Adrenal gland (tissue), 19 donors: ENCODE measurements at regions of chr4 and their contacts with region 1.

Region 1: DNA sequence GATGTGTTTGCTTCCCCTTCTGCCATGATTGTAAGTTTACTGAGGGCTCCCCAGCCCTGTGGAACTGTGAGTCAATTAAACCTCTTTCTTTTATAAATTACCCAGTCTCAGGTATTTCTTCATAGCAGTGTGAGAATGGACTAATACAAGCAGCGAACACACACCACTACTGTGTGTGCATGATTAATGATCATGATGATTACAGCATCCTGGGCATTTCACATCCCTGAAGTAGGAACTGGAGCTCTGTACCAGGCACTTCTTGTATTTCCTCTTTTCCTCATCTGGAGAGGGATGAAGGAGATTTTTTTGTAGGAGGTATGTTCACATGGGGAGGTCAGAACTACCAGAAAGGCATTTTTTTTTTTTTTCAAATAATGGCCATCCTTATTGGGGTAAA is 60.8 kb downstream of the PPM1K start:
- DNase-seq: no peak
- H3K4me3 ChIP-seq: no peak overlapping the region
- H3K27ac ChIP-seq: no peak overlapping the region
- H3K4me1 ChIP-seq: no peaks in the 10 kb centered on the region
- H3K27me3 ChIP-seq: no peaks in the 10 kb centered on the region
- CTCF ChIP-seq: no peak
- POLR2A ChIP-seq: no peak

Region 2: GRCh38 chr4:88147799-88148217 is 75.7 kb before region 1 on chr4:
- intact Hi-C with region 1: no loop called
- DNase-seq: no peak
- H3K4me3 ChIP-seq: no peak overlapping the region
- H3K27ac ChIP-seq: no peak overlapping the region
- H3K4me1 ChIP-seq: no peaks in the 10 kb centered on the region
- H3K27me3 ChIP-seq: no peaks in the 10 kb centered on the region
- CTCF ChIP-seq: no peak
- POLR2A ChIP-seq: no peak

Region 3: GRCh38 chr4:88366460-88366859 is 142.9 kb after region 1 on chr4:
- intact Hi-C with region 1: loop called in 1 of 2 experiments (anchors 5 kb)
- DNase-seq: no peak
- H3K4me3 ChIP-seq: no peak overlapping the region
- H3K27ac ChIP-seq: no peak overlapping the region
- H3K4me1 ChIP-seq: no peaks in the 10 kb centered on the region
- H3K27me3 ChIP-seq: no peaks in the 10 kb centered on the region
- CTCF ChIP-seq: no peak
- POLR2A ChIP-seq: no peak